Activated CD4-positive, alpha-beta T cell treated with anti-CD3 and anti-CD28 coated beads for 36 hours (primary cell): ENCODE measurements at regions of chr22 and their contacts with region 1.

Region 1: GRCh38 chr22:17158568-17159503 is at the start of gene HDHD5:
- DNase-seq: peak; percentile 94
- ATAC-seq: peak; percentile 82
- H3K4me3 Mint-ChIP-seq: peak within 1 kb of the TSS; percentile 84
- H3K27ac Mint-ChIP-seq: peak within 1 kb of the TSS; percentile 87
- H3K4me1 Mint-ChIP-seq: peaks cover 32% of the 10 kb centered on the region
- H3K27me3 Mint-ChIP-seq: no peaks in the 10 kb centered on the region
- total RNA-seq, gene HDHD5: 51.6 to 69.0 TPM

Region 2: DNA sequence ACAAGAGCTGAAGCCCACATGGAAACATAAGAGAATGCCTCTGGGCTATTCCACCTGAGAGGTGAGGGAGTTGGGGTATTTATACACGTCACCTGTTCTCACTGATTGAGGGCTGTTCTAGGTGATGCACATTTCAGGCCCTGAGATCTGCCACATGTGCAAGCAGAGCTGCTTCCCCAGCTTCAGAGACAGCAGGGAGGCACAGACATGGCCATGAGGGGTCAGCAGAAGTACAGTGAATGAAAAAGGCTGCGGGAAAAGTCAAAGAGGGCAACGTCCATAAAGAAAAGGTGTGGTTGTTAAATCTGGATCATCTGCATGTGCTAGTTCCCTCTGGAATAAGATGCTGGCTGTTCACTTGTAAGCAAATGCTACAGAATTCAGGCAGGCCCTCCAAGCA is 226.3 kb before region 1 on chr22:
- CTCF ChIA-PET with region 1: no interaction called
- POLR2A ChIA-PET with region 1: no interaction called
- intact Hi-C with region 1: no loop called
- DNase-seq: no peak
- ATAC-seq: no peak
- H3K4me3 Mint-ChIP-seq: no peak overlapping the region
- H3K27ac Mint-ChIP-seq: no peak overlapping the region
- H3K4me1 Mint-ChIP-seq: no peaks in the 10 kb centered on the region
- H3K27me3 Mint-ChIP-seq: peaks cover 11% of the 10 kb centered on the region

Region 3: DNA sequence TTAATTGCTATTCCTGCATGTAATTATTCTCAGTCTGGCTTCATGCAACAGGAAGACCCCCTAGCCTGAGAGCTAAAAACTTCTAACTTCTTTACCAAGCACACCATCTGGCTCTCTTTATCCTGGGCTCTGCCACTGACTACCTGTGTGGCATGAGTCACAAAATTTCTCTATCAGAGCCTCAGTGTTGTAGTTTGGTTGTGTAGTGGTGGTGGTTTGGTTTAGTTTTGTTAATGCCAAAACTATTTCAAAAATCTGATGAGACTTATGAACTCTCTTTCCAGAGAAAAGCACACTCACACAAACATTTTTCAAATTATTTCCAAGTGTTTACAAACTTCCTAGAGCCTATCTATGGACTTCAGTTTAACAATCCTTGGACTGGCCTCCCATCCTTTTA is 81.6 kb before region 1 on chr22:
- CTCF ChIA-PET with region 1: interaction called, 8 read pairs
- POLR2A ChIA-PET with region 1: no interaction called
- intact Hi-C with region 1: loop called in 1 of 2 experiments (anchors 1 kb)
- DNase-seq: no peak
- ATAC-seq: no peak
- H3K4me3 Mint-ChIP-seq: no peak overlapping the region
- H3K27ac Mint-ChIP-seq: no peak overlapping the region
- H3K4me1 Mint-ChIP-seq: peaks cover 24% of the 10 kb centered on the region
- H3K27me3 Mint-ChIP-seq: no peaks in the 10 kb centered on the region

Region 4: DNA sequence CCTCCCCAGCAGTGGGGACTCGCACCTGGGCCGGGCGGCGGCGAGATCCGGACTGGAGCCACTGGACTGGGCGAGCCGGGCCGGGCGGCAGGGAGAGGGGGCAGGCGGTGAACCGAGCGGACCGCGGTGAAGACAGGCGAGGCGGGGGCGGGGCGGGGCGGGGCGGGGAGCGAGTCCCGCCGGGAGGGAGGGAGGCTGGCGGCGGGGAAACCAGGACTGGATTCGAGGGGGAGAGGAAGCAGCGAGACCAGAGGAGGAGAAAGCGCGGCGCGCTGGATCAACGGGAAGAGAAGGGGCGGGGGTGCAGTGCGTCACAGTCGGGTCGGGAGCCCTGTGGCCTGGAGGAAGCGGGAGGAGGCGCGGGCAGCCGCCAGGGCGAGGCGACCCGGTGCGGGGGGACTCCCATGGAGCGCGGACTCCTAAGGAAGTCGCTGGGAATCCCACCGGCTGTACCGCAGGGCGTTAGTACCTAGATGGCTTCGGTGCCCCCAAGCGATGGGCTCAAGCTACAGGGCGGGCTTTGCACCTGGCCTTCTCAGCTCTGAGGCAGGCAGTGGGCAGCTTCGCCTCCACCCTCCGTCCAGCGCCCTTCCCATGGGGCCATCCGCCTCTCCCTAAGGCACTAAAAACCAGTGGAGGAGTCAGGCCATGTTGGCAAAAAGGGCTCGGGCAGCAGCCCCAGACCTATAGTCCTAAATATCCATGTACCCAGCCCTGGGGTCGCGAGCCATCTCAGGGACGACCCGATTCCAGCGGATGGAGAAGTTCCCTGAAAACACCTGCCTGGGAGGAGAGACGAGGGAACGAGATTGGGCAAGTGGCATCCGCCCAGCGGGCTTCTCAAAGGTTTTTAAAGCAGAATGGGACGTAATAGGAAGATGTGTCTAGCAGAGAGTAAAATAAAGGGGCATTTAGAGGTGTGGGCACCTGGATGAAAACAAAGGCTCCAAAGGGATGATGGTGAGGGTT is 37.3 kb before region 1 on chr22 and contains the start of gene TMEM121B:
- CTCF ChIA-PET with region 1: interaction called, 5 read pairs
- POLR2A ChIA-PET with region 1: no interaction called
- intact Hi-C with region 1: loop called (anchors 1 to 5 kb)
- DNase-seq: peak; percentile 65
- ATAC-seq: peak; percentile 42
- H3K4me3 Mint-ChIP-seq: peak within 1 kb of the TSS; percentile 61
- H3K27ac Mint-ChIP-seq: no peak within 1 kb of the TSS
- H3K4me1 Mint-ChIP-seq: peaks cover 32% of the 10 kb centered on the region
- H3K27me3 Mint-ChIP-seq: peaks cover 19% of the 10 kb centered on the region
- total RNA-seq, gene TMEM121B: 0.14 to 0.19 TPM

Region 5: GRCh38 chr22:17191163-17191784 is 32.4 kb after region 1 on chr22:
- CTCF ChIA-PET with region 1: no interaction called
- POLR2A ChIA-PET with region 1: no interaction called
- intact Hi-C with region 1: no loop called
- DNase-seq: no peak
- ATAC-seq: no peak
- H3K4me3 Mint-ChIP-seq: no peak overlapping the region
- H3K27ac Mint-ChIP-seq: peak overlapping the region; percentile 25
- H3K4me1 Mint-ChIP-seq: peaks cover 3% of the 10 kb centered on the region
- H3K27me3 Mint-ChIP-seq: no peaks in the 10 kb centered on the region

Region 6: GRCh38 chr22:17628304-17629166 is 469.7 kb after region 1 on chr22 and contains the start of gene ATP6V1E1:
- CTCF ChIA-PET with region 1: no interaction called
- POLR2A ChIA-PET with region 1: no interaction called
- intact Hi-C with region 1: loop called in 1 of 2 experiments (anchors 1 kb)
- DNase-seq: peak; percentile 96
- ATAC-seq: peak; percentile 100
- H3K4me3 Mint-ChIP-seq: peak within 1 kb of the TSS; percentile 95
- H3K27ac Mint-ChIP-seq: peak within 1 kb of the TSS; percentile 93
- H3K4me1 Mint-ChIP-seq: peaks cover 19% of the 10 kb centered on the region
- H3K27me3 Mint-ChIP-seq: no peaks in the 10 kb centered on the region
- total RNA-seq, gene ATP6V1E1: 83.5 to 95.6 TPM

Region 7: GRCh38 chr22:17773606-17774205 is 614.9 kb after region 1 on chr22:
- CTCF ChIA-PET with region 1: no interaction called
- POLR2A ChIA-PET with region 1: no interaction called
- intact Hi-C with region 1: loop called in 1 of 2 experiments (anchors 5 kb)
- DNase-seq: peak; percentile 81
- ATAC-seq: peak; percentile 51
- H3K4me3 Mint-ChIP-seq: peak overlapping the region; percentile 75
- H3K27ac Mint-ChIP-seq: no peak overlapping the region
- H3K4me1 Mint-ChIP-seq: peaks cover 75% of the 10 kb centered on the region
- H3K27me3 Mint-ChIP-seq: peaks cover 2% of the 10 kb centered on the region

Region 8: GRCh38 chr22:17797721-17798559 is 639.1 kb after region 1 on chr22:
- CTCF ChIA-PET with region 1: no interaction called
- POLR2A ChIA-PET with region 1: no interaction called
- intact Hi-C with region 1: no loop called
- DNase-seq: no peak
- ATAC-seq: peak; percentile 57
- H3K4me3 Mint-ChIP-seq: no peak overlapping the region
- H3K27ac Mint-ChIP-seq: no peak overlapping the region
- H3K4me1 Mint-ChIP-seq: no peaks in the 10 kb centered on the region
- H3K27me3 Mint-ChIP-seq: no peaks in the 10 kb centered on the region